G401 (cell line): ENCODE measurements at regions of chr1 and their contacts with region 1.

Region 1: DNA sequence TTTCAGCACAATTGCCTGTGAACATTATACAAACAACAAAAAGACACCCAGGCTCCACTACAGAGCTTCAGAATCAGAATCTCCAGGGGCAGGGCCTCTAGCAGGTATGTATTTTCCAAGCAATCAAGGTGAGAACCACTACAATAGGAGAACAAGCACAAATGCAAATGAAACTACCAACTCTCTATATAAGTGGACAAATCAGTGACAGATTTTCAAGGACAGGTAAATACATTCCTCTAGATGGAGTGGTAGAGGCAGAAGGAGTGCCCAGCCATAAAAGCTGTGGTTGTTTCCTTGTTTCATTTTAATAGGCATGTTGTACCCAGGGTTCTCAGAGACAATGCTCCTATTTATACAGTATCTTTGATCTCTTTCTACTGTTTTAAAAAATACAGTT is 20.1 kb upstream of the CCDC17 start:
- DNase-seq: no peak

Region 2: DNA sequence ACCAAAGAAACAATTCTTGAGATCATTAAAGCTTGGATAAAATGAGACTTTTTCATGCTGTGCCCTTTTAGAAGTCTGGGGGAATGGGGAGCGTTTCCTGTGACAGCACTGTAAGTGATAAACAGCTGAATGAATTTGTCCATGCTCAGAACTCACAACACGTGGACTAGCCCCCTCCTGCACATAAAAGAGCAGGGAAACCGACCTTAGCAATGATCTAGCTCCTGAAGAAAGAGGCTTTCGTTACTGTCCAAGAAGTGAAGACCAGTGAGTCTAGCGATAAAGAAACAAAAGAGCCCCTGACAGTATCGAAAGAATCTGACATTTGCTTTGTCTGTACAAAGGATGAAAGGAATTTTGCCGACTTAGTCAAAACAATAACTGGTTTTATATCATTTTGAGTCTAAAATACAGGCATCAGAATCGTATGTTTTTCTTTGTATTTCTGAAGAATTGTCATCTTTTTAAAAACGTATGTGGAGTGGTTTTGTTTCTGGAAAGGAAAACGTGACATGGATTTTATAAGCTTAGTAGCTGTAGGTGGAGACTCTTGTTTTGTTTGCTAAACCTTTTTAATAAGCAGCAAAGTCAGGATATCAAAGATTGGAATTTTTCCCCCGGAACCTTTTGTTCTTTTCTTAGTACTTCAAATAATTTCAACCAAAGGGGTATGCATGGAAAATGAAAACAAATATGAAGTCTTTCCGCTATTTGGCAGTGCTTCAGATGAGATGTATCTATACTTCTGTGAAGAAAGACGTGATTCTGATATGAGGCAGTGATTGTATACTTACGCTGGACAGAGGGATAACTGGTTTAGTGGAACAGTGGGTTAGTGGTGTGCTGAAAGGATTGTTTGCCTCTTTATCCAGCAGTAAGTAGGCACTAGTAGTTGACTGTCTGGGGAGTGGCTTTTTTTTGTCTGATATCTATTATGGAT is 220.5 kb after region 1 on chr1:
- in situ Hi-C with region 1: loop called (anchors 25 kb)
- DNase-seq: peak; percentile 58